Activated CD8-positive, alpha-beta memory T cell treated with anti-CD3 and anti-CD28 coated beads, Interleukin-2, amount 10 ng/mL, durations not matched to agents 7 days and 5 days (primary cell): ENCODE measurements at regions of chr17 and their contacts with region 1.

Region 1: GRCh38 chr17:76714822-76715495 is 4.2 kb upstream of the MXRA7 start:
- DNase-seq: peak; percentile 86
- ATAC-seq: peak; percentile 2
- H3K4me3 Mint-ChIP-seq: peak overlapping the region; percentile 49
- H3K27ac Mint-ChIP-seq: peak overlapping the region; percentile 94
- H3K4me1 Mint-ChIP-seq: peaks cover 56% of the 10 kb centered on the region
- H3K27me3 Mint-ChIP-seq: no peaks in the 10 kb centered on the region

Region 2: GRCh38 chr17:76737082-76737675 is 22.2 kb after region 1 on chr17 and contains the start of gene SRSF2:
- CTCF ChIA-PET with region 1: interaction called, 47 read pairs
- DNase-seq: peak; percentile 99
- ATAC-seq: peak; percentile 74
- H3K4me3 Mint-ChIP-seq: peak within 1 kb of the TSS; percentile 92
- H3K27ac Mint-ChIP-seq: peak within 1 kb of the TSS; percentile 100
- H3K4me1 Mint-ChIP-seq: peaks cover 42% of the 10 kb centered on the region
- H3K27me3 Mint-ChIP-seq: no peaks in the 10 kb centered on the region
- total RNA-seq, gene SRSF2: 443 to 471 TPM